HAP-1 (cell line): ENCODE measurements at regions of chr19 and their contacts with region 1.

Region 1: DNA sequence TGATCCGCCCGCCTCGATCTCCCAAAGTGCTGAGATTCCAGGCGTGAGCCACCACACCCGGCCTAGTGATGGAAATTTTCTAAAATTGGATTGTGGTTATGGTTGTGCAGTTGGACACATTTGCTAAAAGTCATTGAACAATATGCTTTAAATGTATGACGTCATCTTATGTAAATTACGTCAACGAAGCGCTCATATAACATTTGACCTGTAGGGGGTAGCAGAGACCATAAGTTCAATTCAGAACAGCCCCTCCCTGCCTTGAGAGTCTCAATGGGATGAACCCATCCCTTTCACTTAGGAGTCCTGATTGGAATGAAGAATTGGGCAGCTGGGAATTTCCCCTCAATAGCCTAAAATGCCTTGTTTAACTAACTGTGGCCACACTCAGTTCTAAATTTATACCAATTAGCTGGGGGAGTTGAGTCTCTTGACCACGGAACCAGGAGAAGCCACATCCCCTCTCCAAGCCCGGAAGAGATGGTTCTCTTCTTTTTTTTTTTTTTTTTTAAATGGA is 15.3 kb upstream of the TLE6 start:
- DNase-seq: peak; percentile 79 to 81
- H3K4me3 ChIP-seq: no peak overlapping the region
- H3K4me1 ChIP-seq: no peaks in the 10 kb centered on the region
- H3K27me3 ChIP-seq: no peaks in the 10 kb centered on the region; the same call in 1 of the 2 replicates

Region 2: GRCh38 chr19:2678043-2678671 is 283.9 kb before region 1 on chr19:
- in situ Hi-C with region 1: no loop called
- DNase-seq: no peak
- H3K4me3 ChIP-seq: no peak overlapping the region
- H3K4me1 ChIP-seq: no peaks in the 10 kb centered on the region
- H3K27me3 ChIP-seq: no peaks in the 10 kb centered on the region

Region 3: GRCh38 chr19:3100081-3100864 is 138.2 kb after region 1 on chr19:
- in situ Hi-C with region 1: loop called (anchors 5 kb)
- DNase-seq: no peak
- H3K4me3 ChIP-seq: no peak overlapping the region
- H3K4me1 ChIP-seq: peaks cover 7% of the 10 kb centered on the region
- H3K27me3 ChIP-seq: no peaks in the 10 kb centered on the region

Region 4: GRCh38 chr19:3423183-3423829 is 461.2 kb after region 1 on chr19:
- in situ Hi-C with region 1: no loop called
- DNase-seq: no peak
- H3K4me3 ChIP-seq: no peak overlapping the region
- H3K4me1 ChIP-seq: no peaks in the 10 kb centered on the region
- H3K27me3 ChIP-seq: no peaks in the 10 kb centered on the region